ENCODE measurements at regions of chr18 and their contacts with region 1.

Region 1: DNA sequence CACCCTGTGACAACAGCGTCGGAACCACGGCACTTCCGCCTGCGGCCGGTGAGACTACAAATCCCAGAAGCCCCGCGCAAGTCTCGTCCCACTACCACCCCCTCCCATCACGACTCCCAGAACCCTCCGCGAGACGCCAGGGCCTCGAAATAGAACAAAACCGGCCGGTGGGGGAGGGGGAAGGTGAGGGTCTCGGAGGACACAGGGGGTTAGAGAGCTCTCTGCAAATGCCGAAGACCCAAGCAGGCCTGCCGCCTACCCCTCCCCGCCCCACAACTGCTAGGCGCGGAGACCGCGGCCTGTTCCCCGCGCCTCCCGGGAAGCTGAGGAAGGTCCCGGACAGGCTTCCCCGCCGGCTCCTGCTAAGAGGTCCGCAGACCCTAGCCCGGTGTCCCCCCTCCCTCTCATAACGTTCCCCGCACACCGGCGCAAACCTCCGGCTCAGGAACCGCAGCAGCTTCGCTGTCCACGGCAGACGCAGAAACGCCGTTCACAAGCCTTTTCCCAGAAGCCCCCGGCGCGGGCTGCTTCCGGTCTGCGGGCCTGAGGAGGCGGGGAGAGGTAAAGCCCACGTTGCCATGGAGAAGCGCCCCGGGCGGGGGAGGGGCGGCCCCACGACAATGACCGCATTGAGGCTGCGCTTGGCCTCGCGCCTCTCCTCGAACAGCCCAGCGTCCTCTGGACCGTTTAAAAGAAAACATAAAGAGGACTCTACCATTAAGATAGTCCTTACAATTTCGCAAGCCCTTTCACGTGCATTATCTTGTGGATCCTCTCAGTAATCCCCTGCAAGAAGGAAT is at the start of gene ZNF24:
- DNase-seq: peak; percentile 87
- H3K4me3 ChIP-seq: peak within 1 kb of the TSS; percentile 76 to 92 (median 76)
- H3K27ac ChIP-seq: peak within 1 kb of the TSS; percentile 90
- H3K4me1 ChIP-seq: peaks cover 7% of the 10 kb centered on the region
- H3K27me3 ChIP-seq: no peaks in the 10 kb centered on the region
- CTCF ChIP-seq: no peak
- total RNA-seq, gene ZNF24: 32.8 to 36.3 TPM

Region 2: DNA sequence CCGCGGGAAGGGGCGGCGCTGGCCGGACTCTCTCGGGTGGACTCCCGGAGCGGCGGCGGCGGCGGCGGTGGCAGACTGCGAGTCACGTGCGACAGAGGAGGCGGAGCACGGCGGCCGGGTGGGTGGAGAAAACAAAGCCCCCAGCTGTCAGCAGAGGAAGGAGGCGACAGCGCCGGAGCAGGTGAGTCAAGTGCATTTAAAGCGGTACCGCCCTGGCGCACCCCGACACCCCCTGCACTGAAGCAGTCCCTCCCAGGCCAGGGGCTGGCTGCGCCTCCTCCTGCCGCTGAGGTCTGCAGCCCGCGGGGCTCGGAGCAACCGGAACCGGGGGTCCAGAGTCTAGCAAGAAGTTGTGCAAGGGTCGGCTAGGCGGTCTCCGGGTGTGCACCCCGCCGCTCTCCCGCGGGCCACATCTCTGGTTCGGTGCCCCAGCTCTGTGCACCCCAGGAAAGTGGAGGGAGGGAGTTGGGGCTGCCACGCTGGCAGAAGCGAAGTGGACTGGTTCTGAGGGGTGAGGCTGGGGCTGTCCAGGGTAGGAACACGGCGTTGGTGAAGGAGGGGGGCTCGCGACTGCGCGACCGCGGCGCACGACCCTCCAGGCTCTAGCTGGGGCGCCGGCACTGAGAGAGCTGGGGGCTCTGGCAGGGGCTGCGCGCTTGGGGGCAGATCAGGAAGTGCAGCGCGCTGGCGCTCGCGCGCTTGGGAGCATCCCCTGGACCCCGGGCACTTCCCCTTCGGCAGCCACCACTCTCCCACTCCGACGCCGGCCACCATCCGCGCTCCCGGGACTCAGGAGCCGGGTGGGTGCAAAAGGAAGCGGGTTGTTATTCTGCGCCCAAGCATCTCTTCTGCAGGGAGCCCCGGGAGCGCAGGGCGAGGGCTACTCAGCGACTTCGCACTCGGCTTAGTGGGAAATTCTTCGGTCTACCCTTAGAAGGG is 367.0 kb before region 1 on chr18:
- CTCF ChIA-PET with region 1: no interaction called
- dilution Hi-C with region 1: no loop called
- in situ Hi-C with region 1: no loop called
- intact Hi-C with region 1: loop called (anchors 10 kb)
- DNase-seq: no peak
- H3K4me3 ChIP-seq: peak overlapping the region; percentile 36 to 53 (median 52)
- H3K27ac ChIP-seq: no peak overlapping the region
- H3K4me1 ChIP-seq: peaks cover 28% of the 10 kb centered on the region
- H3K27me3 ChIP-seq: peaks cover 17% of the 10 kb centered on the region
- CTCF ChIP-seq: no peak

Region 3: GRCh38 chr18:35290073-35290735 is 53.9 kb before region 1 on chr18 and contains the start of gene ZSCAN30:
- CTCF ChIA-PET with region 1: no interaction called
- dilution Hi-C with region 1: no loop called
- in situ Hi-C with region 1: no loop called
- intact Hi-C with region 1: loop called (anchors 2 kb)
- DNase-seq: peak; percentile 95
- H3K4me3 ChIP-seq: peak within 1 kb of the TSS; percentile 59 to 92 (median 73)
- H3K27ac ChIP-seq: peak within 1 kb of the TSS; percentile 71
- H3K4me1 ChIP-seq: peaks cover 8% of the 10 kb centered on the region
- H3K27me3 ChIP-seq: no peaks in the 10 kb centered on the region
- CTCF ChIP-seq: no peak
- total RNA-seq, gene ZSCAN30: 15.4 to 17.3 TPM

Measured in mammary epithelial cell (primary cell).